Dorsolateral prefrontal cortex (tissue), 120 donors: ENCODE measurements at regions of chr2 and their contacts with region 1.

Region 1: GRCh38 chr2:59830601-59831000 is 722.9 kb downstream of the BCL11A start:
- DNase-seq: no peak
- H3K4me3 ChIP-seq: no peak overlapping the region
- H3K27ac ChIP-seq: no peak overlapping the region
- H3K27me3 ChIP-seq: peaks cover 0 to 3% (median 0%) of the 10 kb centered on the region in 45 donors
- CTCF ChIP-seq: no peak

Region 2: DNA sequence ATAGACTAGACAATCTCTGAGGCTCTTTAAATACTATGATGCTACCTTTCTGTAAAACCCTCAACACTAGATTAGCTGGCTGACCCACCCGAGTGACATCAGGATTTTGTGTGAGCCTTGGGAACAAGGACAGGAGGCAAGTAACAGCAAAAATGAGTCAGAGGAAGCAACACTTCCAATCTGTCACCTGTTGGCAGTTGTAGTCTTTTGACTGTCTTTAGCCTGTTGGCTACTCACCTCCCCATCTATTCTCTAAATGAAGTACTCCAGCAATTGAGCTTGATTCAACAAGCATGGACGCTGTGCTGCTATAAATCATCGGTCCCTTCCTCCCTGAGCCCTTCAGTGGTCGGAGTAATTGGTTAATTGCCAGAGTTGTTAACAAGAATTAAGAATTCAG is 175.9 kb before region 1 on chr2:
- intact Hi-C with region 1: loop called in 1 of 2 experiments (anchors 5 kb)
- DNase-seq: no peak
- H3K4me3 ChIP-seq: no peak overlapping the region
- H3K27ac ChIP-seq: no peak overlapping the region
- H3K27me3 ChIP-seq: peaks cover 0 to 24% (median 0%) of the 10 kb centered on the region in 45 donors
- CTCF ChIP-seq: no peak

Region 3: DNA sequence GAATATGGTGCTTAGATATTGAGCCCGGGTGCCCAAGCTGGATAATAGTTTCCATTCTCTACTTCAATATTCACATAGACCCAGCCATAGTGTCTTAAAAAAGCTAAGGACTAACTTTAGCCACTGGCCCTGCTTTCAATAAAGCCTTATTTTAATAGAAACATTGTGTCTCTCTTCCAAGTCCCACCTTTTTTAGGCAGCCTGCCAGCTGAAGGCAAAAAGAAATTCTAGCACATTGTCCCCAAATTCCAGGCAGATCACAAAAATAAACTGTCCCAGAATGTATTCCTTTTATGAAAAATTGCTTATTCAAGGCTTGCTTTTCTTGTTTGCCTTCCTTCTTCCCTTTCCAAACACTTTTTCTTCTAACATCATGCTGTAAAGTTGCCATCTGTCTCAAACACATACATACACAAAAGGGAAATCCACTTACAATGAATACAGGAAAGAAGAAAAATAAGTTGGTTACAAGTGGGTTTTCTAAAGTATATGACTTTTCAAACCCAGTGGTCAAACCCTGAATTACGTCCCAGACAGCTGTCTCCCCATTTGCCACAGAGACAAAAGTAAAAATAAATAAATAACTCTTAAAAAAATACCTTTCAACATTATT is 55.7 kb before region 1 on chr2:
- intact Hi-C with region 1: no loop called
- DNase-seq: peak in 2 of 10 donors; percentile 6 to 19
- H3K4me3 ChIP-seq: no peak overlapping the region
- H3K27ac ChIP-seq: no peak overlapping the region
- H3K27me3 ChIP-seq: no peaks in the 10 kb centered on the region
- CTCF ChIP-seq: peak in 7 of 56 donors; percentile 13 to 34 (median 24)

Region 4: DNA sequence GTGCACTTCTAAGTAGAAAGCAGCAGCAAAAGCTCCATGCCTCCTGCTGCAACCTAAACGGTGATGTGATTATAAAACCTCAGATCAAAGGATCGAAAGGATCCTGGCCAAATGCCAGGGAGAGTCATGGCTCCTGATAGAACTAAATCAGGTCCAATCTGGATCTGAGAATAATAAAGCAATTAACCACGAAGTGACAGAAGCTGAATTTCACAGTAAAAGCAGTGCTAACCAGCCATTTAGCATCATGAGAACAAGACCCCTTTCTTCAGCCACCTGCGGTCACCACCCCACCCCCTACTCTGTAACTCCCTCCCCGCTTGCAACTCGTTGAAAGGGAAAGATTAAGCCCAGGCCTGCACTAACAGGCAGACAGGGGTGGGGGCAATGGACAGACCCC is 25.9 kb before region 1 on chr2:
- intact Hi-C with region 1: no loop called
- DNase-seq: no peak
- H3K4me3 ChIP-seq: no peak overlapping the region
- H3K27ac ChIP-seq: no peak overlapping the region
- H3K27me3 ChIP-seq: no peaks in the 10 kb centered on the region
- CTCF ChIP-seq: no peak